CD8-positive, alpha-beta memory T cell (primary cell): ENCODE measurements at regions of chr15 and their contacts with region 1.

Region 1: DNA sequence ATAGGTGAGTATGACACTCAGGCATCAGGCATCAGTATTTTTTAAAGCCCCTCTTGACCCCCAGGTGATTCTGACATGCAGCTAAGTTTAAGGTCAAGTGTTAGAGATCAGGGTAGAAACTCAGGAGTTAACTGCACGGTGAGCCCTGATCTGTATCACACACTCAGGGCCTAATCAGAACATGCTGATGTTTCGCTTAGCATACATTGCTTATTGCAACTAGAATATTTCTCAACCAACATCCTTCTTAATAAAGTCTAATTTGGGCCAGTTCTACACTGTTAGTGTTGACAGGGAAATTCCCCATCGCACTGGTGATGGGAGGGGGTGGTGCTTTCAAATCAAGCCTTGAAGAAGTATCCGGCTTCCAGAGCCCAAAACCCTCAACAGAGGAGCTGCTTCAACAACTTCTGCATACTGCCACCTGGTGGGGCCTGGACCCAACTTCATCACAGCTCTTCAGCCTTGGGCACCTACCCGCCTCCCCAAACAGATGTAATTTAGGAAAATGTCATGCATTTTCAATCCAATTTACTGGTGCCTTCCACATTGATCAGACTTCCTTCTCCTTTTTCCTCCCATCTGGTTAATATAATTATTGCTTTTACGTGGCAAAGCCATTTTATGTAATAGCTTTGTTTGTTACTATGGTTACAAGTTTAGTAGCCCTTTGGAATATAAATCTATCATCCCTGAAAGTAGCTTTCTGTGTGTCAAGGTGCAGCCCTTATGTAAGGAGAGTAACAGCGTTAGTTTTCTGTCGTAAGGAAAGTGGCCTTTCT is 312.2 kb downstream of the RORA start:
- DNase-seq: peak; percentile 77 to 91 (median 78)
- H3K4me3 ChIP-seq: no peak overlapping the region
- H3K4me3 Mint-ChIP-seq: peak overlapping the region in 1 of 7 donors; percentile 44
- H3K27ac ChIP-seq: no peak overlapping the region
- H3K27ac Mint-ChIP-seq: peak overlapping the region; percentile 40 to 90 (median 72)
- H3K4me1 ChIP-seq: peaks cover 6% of the 10 kb centered on the region
- H3K4me1 Mint-ChIP-seq: peaks cover 11 to 12% (median 11%) of the 10 kb centered on the region in 3 donors
- H3K27me3 ChIP-seq: no peaks in the 10 kb centered on the region
- H3K27me3 Mint-ChIP-seq: peaks cover 0 to 2% of the 10 kb centered on the region in 2 donors

Region 2: GRCh38 chr15:60507596-60508424 is 409.1 kb before region 1 on chr15:
- CTCF ChIA-PET with region 1: interaction called, 20 read pairs
- POLR2A ChIA-PET with region 1: no interaction called
- DNase-seq: peak; percentile 12 to 70 (median 69)
- H3K4me3 ChIP-seq: no peak overlapping the region
- H3K4me3 Mint-ChIP-seq: peak overlapping the region in 6 of 7 donors; percentile 2 to 55 (median 23)
- H3K27ac ChIP-seq: no peak overlapping the region
- H3K27ac Mint-ChIP-seq: peak overlapping the region; percentile 61 to 93 (median 88)
- H3K4me1 ChIP-seq: peaks cover 23% of the 10 kb centered on the region
- H3K4me1 Mint-ChIP-seq: peaks cover 46 to 62% (median 56%) of the 10 kb centered on the region in 3 donors
- H3K27me3 ChIP-seq: no peaks in the 10 kb centered on the region
- H3K27me3 Mint-ChIP-seq: peaks cover 0 to 3% of the 10 kb centered on the region in 2 donors

Region 3: DNA sequence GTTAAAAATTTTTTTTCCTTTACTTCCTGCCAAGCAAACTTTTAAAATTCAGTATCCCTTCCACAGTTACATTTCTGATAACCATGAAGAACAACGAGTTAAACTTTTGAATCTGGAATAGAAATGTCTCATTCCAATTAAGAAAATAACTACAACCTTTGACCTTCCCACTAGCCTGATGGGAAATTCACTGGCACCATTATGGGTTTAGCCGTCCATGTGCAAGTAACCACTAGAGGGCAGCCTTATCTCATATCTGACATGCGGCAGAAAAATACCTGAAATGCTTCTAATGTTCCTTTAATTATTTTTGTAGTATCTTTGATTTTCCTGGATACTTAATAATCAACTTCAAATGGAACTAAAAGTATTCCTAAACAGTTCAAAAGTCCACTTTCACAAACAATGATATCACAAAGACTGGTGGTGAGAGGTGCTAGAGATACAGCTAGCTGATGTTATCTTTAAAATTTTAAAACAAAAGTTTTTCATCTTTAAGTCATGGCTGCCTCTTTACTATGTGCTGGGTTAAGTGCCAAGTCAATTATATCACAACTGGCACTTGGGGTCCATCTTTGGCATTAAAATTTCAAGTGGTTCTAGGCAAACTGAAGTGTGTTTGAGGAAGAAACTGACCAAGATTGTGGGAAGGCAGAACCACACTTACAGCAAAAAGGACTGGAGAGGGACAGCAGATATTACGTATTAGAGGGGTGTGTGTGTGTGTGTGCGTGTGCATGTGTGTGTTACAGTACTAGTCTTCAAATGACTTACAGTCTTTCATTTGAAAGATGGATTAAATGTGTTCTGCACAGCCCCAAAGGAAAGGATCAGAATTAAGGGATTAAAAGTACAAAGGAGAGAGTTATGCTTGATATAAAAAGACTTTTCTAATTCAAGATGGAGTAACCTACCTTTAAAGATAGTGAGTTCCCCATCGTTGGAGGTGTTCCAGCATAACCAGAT is 330.8 kb before region 1 on chr15:
- CTCF ChIA-PET with region 1: interaction called, 19 read pairs
- POLR2A ChIA-PET with region 1: interaction called, 3 read pairs
- DNase-seq: peak in 4 of 5 donors; percentile 48 to 76 (median 74)
- H3K4me3 ChIP-seq: peak overlapping the region; percentile 16
- H3K4me3 Mint-ChIP-seq: peak overlapping the region; percentile 67 to 94 (median 81)
- H3K27ac ChIP-seq: no peak overlapping the region
- H3K27ac Mint-ChIP-seq: peak overlapping the region; percentile 66 to 99 (median 94)
- H3K4me1 ChIP-seq: peaks cover 92% of the 10 kb centered on the region
- H3K4me1 Mint-ChIP-seq: peaks cover 86 to 98% (median 93%) of the 10 kb centered on the region in 3 donors
- H3K27me3 ChIP-seq: no peaks in the 10 kb centered on the region
- H3K27me3 Mint-ChIP-seq: peaks cover 0 to 2% of the 10 kb centered on the region in 2 donors

Region 4: DNA sequence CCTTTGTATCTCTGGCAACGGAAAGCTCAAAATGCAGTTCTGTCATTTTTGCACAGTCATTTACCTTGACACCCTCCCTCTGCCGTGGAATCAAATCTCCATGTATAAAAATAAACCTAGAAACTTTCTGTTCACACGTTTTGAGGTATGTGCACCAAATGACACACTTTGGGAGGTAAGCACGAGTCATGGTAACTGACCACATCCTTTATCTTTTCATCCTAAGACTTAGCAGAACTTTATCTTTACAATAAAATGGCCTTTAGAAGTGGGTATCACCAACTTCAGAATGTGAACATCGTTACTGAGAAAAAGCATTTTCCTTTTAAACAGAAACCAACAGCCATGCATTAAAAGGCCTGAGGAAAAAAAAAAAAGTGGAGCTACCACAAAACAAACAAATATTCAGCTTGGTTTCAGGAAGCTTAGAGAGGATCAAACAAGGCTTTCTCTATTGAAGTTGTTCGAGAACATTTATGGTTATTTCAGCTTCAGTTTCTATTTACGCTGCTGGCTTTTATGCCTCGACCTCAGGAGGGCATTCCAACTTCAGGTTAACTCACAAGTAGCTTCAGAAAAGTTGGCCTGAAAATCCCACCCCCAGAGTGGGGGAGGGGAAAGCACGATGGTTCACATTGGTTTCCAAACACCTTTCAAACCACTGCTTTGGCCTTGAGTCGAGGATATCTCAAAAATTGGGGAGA is 266.9 kb before region 1 on chr15:
- CTCF ChIA-PET with region 1: interaction called, 14 read pairs
- POLR2A ChIA-PET with region 1: no interaction called
- DNase-seq: peak; percentile 5 to 82 (median 64)
- H3K4me3 ChIP-seq: peak overlapping the region; percentile 57
- H3K4me3 Mint-ChIP-seq: peak overlapping the region; percentile 68 to 90 (median 82)
- H3K27ac ChIP-seq: peak overlapping the region; percentile 49
- H3K27ac Mint-ChIP-seq: peak overlapping the region; percentile 79 to 98 (median 94)
- H3K4me1 ChIP-seq: peaks cover 30% of the 10 kb centered on the region
- H3K4me1 Mint-ChIP-seq: peaks cover 46 to 55% (median 53%) of the 10 kb centered on the region in 3 donors
- H3K27me3 ChIP-seq: no peaks in the 10 kb centered on the region
- H3K27me3 Mint-ChIP-seq: peaks cover 0 to 2% of the 10 kb centered on the region in 2 donors

Region 5: DNA sequence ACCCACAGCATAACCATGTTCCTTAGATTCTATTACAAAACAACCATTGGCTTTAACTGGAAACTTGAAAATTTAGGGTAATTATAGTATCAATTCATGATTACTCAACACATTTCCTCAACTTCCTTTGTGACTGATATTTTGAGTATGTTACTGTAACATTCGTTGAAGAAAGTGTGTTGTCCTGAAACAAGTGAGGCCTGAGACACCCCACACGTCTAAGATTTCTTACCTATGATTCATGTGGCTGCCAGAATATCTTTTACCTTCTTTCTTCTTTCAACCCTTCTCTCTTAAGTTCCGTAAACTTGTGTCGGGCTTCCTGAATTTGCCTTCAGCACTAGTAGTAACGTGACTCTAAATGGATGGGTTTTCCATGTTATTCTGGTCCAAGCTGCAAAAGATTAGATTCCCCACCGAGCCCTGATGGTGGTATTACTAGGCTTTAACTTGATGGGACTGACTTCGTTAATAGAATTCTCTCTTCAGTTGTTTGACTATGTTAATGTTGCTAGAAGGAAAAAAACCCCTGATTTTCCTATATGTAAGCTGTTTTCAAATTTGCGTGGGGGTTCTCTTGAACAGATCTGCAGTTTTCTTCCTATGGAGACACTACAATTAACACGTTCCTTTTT is 141.9 kb before region 1 on chr15:
- CTCF ChIA-PET with region 1: no interaction called
- POLR2A ChIA-PET with region 1: no interaction called
- DNase-seq: no peak
- H3K4me3 ChIP-seq: no peak overlapping the region
- H3K4me3 Mint-ChIP-seq: no peak overlapping the region
- H3K27ac ChIP-seq: no peak overlapping the region
- H3K27ac Mint-ChIP-seq: no peak overlapping the region
- H3K4me1 ChIP-seq: no peaks in the 10 kb centered on the region
- H3K4me1 Mint-ChIP-seq: peaks cover 0 to 7% (median 0%) of the 10 kb centered on the region in 3 donors
- H3K27me3 ChIP-seq: peaks cover 3% of the 10 kb centered on the region
- H3K27me3 Mint-ChIP-seq: peaks cover 0 to 3% of the 10 kb centered on the region in 2 donors

Region 6: DNA sequence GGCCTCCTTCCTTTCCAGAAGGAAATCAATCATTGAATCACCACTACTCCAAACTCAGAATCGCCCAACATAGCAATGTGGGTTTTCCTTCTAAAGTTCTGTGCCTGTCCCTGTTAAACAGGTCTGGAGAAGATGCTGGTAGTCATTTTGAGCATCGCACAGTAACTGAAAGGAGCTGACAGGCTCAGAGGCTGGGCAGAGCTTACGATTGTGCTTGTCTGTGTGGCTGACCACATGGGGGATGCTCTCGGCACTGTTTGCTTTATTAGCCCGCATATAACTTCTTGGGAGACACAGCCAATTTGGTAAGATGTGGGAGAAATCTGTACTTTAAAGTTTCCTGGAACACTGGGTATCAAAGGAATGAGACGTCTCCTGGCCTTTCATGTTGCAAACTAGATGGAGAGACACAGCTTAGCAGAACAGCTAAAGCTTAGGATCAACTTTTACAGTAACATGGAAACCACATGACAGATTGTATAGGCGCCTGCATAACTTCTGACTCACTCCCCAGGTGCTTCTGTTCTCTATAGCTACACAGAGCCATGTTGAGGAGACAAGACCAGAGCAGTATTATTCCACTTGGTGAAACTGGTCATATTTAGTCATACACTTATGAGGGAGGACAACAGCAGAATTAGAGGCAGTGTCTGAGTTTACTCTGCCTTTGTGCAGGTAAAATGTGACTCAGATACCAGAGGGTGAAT is 61.9 kb before region 1 on chr15:
- CTCF ChIA-PET with region 1: no interaction called
- POLR2A ChIA-PET with region 1: no interaction called
- DNase-seq: no peak
- H3K4me3 ChIP-seq: no peak overlapping the region
- H3K4me3 Mint-ChIP-seq: peak overlapping the region in 1 of 7 donors; percentile 25
- H3K27ac ChIP-seq: no peak overlapping the region
- H3K27ac Mint-ChIP-seq: peak overlapping the region in 2 of 8 donors; percentile 51 to 59
- H3K4me1 ChIP-seq: no peaks in the 10 kb centered on the region
- H3K4me1 Mint-ChIP-seq: peaks cover 14 to 59% (median 37%) of the 10 kb centered on the region in 3 donors
- H3K27me3 ChIP-seq: no peaks in the 10 kb centered on the region
- H3K27me3 Mint-ChIP-seq: no peaks in the 10 kb centered on the region

Region 7: DNA sequence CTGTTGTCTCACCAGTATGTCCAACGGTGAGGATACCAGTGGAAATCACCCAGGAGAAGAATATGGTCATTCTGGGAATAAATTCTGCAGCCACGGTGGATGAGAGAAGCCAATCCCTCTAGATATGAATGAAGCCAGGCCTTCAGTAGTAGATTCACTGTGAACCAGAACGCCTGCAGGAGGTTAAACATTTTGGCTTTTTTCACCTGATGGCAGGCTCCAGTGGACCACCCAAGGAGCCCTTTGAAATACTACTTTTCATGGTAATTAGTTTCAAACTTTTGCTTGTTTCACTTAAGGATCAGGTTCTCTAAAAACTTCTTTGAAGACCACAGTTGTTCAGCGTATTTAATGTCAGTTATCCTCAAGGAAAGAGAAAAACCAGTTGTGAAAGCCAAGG is 41.2 kb before region 1 on chr15:
- CTCF ChIA-PET with region 1: no interaction called
- POLR2A ChIA-PET with region 1: no interaction called
- DNase-seq: no peak
- H3K4me3 ChIP-seq: no peak overlapping the region
- H3K4me3 Mint-ChIP-seq: no peak overlapping the region
- H3K27ac ChIP-seq: no peak overlapping the region
- H3K27ac Mint-ChIP-seq: no peak overlapping the region
- H3K4me1 ChIP-seq: no peaks in the 10 kb centered on the region
- H3K4me1 Mint-ChIP-seq: no peaks in the 10 kb centered on the region
- H3K27me3 ChIP-seq: no peaks in the 10 kb centered on the region
- H3K27me3 Mint-ChIP-seq: no peaks in the 10 kb centered on the region

Region 8: DNA sequence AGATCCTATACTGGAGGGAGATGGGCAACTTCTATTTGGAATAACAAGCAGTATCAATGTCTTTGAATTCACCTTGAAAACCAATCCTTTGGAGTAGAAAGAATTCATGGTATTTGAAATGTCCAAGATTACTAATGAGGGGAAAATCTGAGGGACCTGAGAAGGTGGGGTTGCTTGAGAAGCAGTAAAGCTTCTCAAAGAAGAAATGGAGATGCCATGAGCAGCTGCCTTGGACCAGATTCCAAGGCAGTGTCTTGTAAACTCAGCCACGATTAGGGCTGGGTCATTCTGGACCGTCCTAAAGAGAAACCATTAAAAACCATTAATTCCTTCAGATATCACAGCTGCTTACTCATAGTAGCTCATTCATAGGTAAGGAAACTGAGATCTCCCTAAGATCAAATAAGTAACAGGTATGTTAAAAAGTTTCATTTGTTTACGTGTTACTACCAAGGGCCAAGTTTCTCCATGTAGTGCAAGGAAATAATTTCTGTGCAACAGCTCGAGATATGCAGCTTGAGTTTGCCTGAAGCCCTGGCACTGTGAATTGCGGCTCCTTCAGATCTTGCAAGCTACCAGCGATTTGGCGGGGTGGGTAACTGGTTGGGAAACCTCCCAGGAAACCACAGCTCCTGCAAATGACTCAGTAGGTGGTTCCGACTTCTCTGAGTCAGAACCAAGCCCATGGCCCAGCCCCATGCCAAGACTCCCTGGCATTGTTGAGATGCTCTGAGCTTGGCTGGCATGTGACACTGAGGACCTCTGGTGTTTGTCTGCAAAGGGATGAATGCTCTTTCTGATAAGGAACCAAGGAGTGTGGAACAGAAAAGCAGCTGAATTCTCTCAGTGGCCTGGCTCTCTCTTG is 15.4 kb after region 1 on chr15:
- CTCF ChIA-PET with region 1: interaction called, 13 read pairs
- POLR2A ChIA-PET with region 1: no interaction called
- DNase-seq: peak; percentile 5 to 75 (median 34)
- H3K4me3 ChIP-seq: no peak overlapping the region
- H3K4me3 Mint-ChIP-seq: peak overlapping the region in 4 of 7 donors; percentile 29 to 58 (median 48)
- H3K27ac ChIP-seq: no peak overlapping the region
- H3K27ac Mint-ChIP-seq: peak overlapping the region in 4 of 8 donors; percentile 7 to 36 (median 22)
- H3K4me1 ChIP-seq: no peaks in the 10 kb centered on the region
- H3K4me1 Mint-ChIP-seq: peaks cover 7 to 19% (median 12%) of the 10 kb centered on the region in 3 donors
- H3K27me3 ChIP-seq: no peaks in the 10 kb centered on the region
- H3K27me3 Mint-ChIP-seq: peaks cover 4 to 7% of the 10 kb centered on the region in 2 donors